H1 (cell line): ENCODE measurements at regions of chr17 and their contacts with region 1.

Region 1: DNA sequence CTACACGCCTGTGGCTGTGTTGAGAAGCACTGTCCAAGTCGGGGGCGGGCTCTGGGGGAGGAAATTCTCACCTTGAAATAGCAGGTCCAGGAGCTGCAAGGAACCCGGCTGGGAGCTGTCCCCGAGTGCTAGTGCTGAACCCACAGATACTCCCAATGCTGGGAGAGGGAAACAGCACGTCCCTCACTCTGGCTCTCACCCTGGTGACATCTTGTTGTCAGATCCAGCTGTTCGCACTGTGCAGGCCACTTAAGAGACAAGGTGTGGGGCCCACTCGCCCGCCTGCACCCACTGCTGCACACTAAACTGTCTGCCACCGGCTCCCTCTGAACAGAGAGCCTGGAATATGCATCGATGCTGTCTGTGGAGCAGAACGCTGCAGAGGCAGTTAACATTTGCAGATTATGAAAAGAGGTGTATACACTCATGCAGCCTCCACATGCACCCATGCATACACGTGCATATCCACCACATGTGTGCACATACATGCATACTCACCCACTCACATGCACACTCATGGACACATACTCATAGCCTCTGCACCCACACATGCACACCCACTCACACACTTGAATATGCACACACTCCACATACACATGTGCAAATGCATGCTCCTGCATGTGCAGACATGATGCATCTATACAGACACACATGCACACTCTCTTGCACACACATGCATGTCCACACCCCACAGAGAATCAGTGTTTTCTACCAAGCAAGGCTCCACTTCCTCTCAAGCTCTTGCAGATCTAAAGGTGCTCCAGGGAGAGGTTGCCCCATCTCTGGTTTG is 42.0 kb downstream of the MGAT5B start:
- DNase-seq: peak; percentile 44 to 91
- H3K4me3 ChIP-seq: no peak overlapping the region
- H3K27ac ChIP-seq: no peak overlapping the region
- H3K4me1 ChIP-seq: peaks cover 0 to 9% (median 4%) of the 10 kb centered on the region in 4 experiments; a peak in 4 of 7 replicates
- H3K27me3 ChIP-seq: no peaks in the 10 kb centered on the region
- CTCF ChIP-seq: no peak
- EP300 ChIP-seq: no peak
- POLR2A ChIP-seq: no peak
- RAD21 ChIP-seq: peak in 1 of 2 experiments; percentile 19; a peak in 1 of 4 replicates

Region 2: DNA sequence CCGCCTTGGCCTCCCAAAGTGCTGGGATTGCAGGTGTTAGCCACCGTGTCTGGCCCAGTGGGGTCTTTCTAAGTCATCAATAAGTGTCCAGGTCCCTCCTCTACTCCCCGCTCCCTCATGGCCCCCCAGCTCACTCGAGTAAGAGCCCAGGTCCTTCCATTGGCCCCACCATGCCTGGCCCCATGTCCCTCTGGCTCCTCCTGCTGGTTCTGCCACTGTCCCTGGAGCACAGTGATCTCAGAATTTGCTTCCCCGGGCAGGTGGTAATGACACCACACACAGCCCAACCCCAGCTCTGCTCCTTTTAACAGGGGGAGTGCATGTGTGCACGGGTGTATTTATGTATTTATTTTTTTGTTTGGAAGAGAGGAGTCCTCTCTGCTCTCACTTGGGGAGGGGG is 22.4 kb before region 1 on chr17:
- CTCF ChIA-PET with region 1: interaction called, 10 read pairs
- POLR2A ChIA-PET with region 1: no interaction called
- DNase-seq: no peak
- H3K4me3 ChIP-seq: no peak overlapping the region
- H3K27ac ChIP-seq: no peak overlapping the region
- H3K4me1 ChIP-seq: peaks cover 0 to 13% (median 7%) of the 10 kb centered on the region in 4 experiments; a peak in 6 of 7 replicates
- H3K27me3 ChIP-seq: no peaks in the 10 kb centered on the region
- CTCF ChIP-seq: peak; percentile 35 to 66 (median 65)
- EP300 ChIP-seq: no peak
- POLR2A ChIP-seq: no peak
- RAD21 ChIP-seq: peak; percentile 22 to 57; a peak in 3 of 4 replicates

Region 3: GRCh38 chr17:76983075-76983775 is 73.1 kb after region 1 on chr17:
- CTCF ChIA-PET with region 1: no interaction called
- POLR2A ChIA-PET with region 1: no interaction called
- DNase-seq: no peak
- H3K4me3 ChIP-seq: no peak overlapping the region
- H3K27ac ChIP-seq: no peak overlapping the region
- H3K4me1 ChIP-seq: peaks cover 2 to 12% (median 5%) of the 10 kb centered on the region in 4 experiments; a peak in 6 of 7 replicates
- H3K27me3 ChIP-seq: peaks cover 0 to 2% (median 0%) of the 10 kb centered on the region in 4 experiments; a peak in 3 of 7 replicates
- CTCF ChIP-seq: no peak
- EP300 ChIP-seq: no peak
- POLR2A ChIP-seq: no peak
- RAD21 ChIP-seq: no peak

Region 4: DNA sequence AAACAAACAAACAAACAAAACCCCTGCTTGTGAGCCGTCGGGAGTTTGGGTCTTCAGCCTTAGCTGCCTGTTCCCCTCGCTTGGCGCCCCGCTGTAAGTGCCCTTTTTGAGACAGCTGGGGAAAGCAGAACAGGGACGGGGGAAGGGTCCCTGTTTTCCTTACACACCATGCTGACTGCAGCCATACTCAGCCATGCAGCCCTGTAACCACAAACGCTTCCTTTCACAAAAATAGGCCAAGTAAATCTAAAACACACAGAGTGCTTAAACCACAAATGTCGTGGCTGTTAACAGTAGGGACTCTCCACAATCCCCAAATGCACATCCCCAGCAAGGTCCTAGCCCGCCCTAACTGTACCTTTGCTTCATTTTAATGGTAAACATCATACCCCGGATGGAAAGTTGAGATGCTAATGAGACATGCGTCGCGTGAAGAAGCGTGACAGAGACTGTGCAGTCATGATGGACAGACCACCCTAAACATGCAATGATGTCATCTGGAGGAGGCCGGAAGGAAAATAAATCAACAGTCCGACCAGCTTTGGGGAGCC is 87.9 kb after region 1 on chr17:
- CTCF ChIA-PET with region 1: no interaction called
- POLR2A ChIA-PET with region 1: no interaction called
- DNase-seq: no peak
- H3K4me3 ChIP-seq: no peak overlapping the region
- H3K27ac ChIP-seq: no peak overlapping the region
- H3K4me1 ChIP-seq: peaks cover 6 to 31% (median 17%) of the 10 kb centered on the region in 4 experiments
- H3K27me3 ChIP-seq: 0 out of 7 replicates have a peak, but pooled peaks cover 0 to 2% (median 0%) of the 10 kb centered on the region in 4 experiments
- CTCF ChIP-seq: no peak
- EP300 ChIP-seq: no peak
- POLR2A ChIP-seq: no peak
- RAD21 ChIP-seq: no peak